ENCODE measurements at regions of chr17 and their contacts with region 1.

Region 1: GRCh38 chr17:80575057-80575875 is 30.6 kb downstream of the RPTOR start:
- DNase-seq: peak; percentile 87
- H3K4me3 ChIP-seq: no peak overlapping the region
- H3K27ac ChIP-seq: no peak overlapping the region
- H3K4me1 ChIP-seq: no peaks in the 10 kb centered on the region
- H3K27me3 ChIP-seq: no peaks in the 10 kb centered on the region
- CTCF ChIP-seq: peak; percentile 100
- POLR2A ChIP-seq: no peak

Region 2: GRCh38 chr17:80477647-80478478 is 97.4 kb before region 1 on chr17:
- CTCF ChIA-PET with region 1: interaction called, 16 read pairs
- POLR2A ChIA-PET with region 1: no interaction called
- dilution Hi-C with region 1: no loop called
- intact Hi-C with region 1: loop called (anchors 1 kb)
- DNase-seq: peak; percentile 21
- H3K4me3 ChIP-seq: no peak overlapping the region
- H3K27ac ChIP-seq: no peak overlapping the region
- H3K4me1 ChIP-seq: no peaks in the 10 kb centered on the region
- H3K27me3 ChIP-seq: peaks cover 69 to 74% of the 10 kb centered on the region in 2 experiments
- CTCF ChIP-seq: peak; percentile 8 to 67
- POLR2A ChIP-seq: no peak

Region 3: GRCh38 chr17:80564545-80564944 is 10.7 kb before region 1 on chr17:
- CTCF ChIA-PET with region 1: interaction called, 10 read pairs
- POLR2A ChIA-PET with region 1: no interaction called
- dilution Hi-C with region 1: no loop called
- intact Hi-C with region 1: no loop called
- DNase-seq: no peak
- H3K4me3 ChIP-seq: no peak overlapping the region
- H3K27ac ChIP-seq: no peak overlapping the region
- H3K4me1 ChIP-seq: no peaks in the 10 kb centered on the region
- H3K27me3 ChIP-seq: no peaks in the 10 kb centered on the region
- CTCF ChIP-seq: no peak
- POLR2A ChIP-seq: no peak

Region 4: GRCh38 chr17:80708480-80708879 is 133.2 kb after region 1 on chr17:
- CTCF ChIA-PET with region 1: no interaction called
- POLR2A ChIA-PET with region 1: no interaction called
- dilution Hi-C with region 1: no loop called
- intact Hi-C with region 1: no loop called
- DNase-seq: no peak
- H3K4me3 ChIP-seq: no peak overlapping the region
- H3K27ac ChIP-seq: no peak overlapping the region
- H3K4me1 ChIP-seq: no peaks in the 10 kb centered on the region
- H3K27me3 ChIP-seq: no peaks in the 10 kb centered on the region
- CTCF ChIP-seq: no peak
- POLR2A ChIP-seq: no peak

Region 5: GRCh38 chr17:80866147-80866793 is 291.0 kb after region 1 on chr17:
- CTCF ChIA-PET with region 1: interaction called, 3 read pairs
- POLR2A ChIA-PET with region 1: no interaction called
- dilution Hi-C with region 1: no loop called
- intact Hi-C with region 1: loop called (anchors 10 kb)
- DNase-seq: peak; percentile 84
- H3K4me3 ChIP-seq: no peak overlapping the region
- H3K27ac ChIP-seq: no peak overlapping the region
- H3K4me1 ChIP-seq: peaks cover 5% of the 10 kb centered on the region
- H3K27me3 ChIP-seq: no peaks in the 10 kb centered on the region
- CTCF ChIP-seq: peak; percentile 75 to 83
- POLR2A ChIP-seq: no peak

Region 6: GRCh38 chr17:80927791-80928216 is 352.5 kb after region 1 on chr17:
- CTCF ChIA-PET with region 1: interaction called, 7 read pairs
- POLR2A ChIA-PET with region 1: no interaction called
- dilution Hi-C with region 1: no loop called
- intact Hi-C with region 1: loop called (anchors 1 kb)
- DNase-seq: peak; percentile 96
- H3K4me3 ChIP-seq: no peak overlapping the region
- H3K27ac ChIP-seq: peak overlapping the region; percentile 54
- H3K4me1 ChIP-seq: peaks cover 18% of the 10 kb centered on the region
- H3K27me3 ChIP-seq: no peaks in the 10 kb centered on the region
- CTCF ChIP-seq: peak; percentile 80 to 84
- POLR2A ChIP-seq: no peak